ENCODE measurements at regions of chr15 and their contacts with region 1.

Region 1: GRCh38 chr15:85010386-85011159 is 28.9 kb downstream of the PDE8A start:
- DNase-seq: no peak
- ATAC-seq: peak; percentile 70
- H3K4me3 ChIP-seq: no peak overlapping the region
- H3K27ac ChIP-seq: peak overlapping the region; percentile 56
- H3K4me1 ChIP-seq: peaks cover 50% of the 10 kb centered on the region
- H3K27me3 ChIP-seq: no peaks in the 10 kb centered on the region
- CTCF ChIP-seq: no peak
- EP300 ChIP-seq: no peak
- POLR2A ChIP-seq: no peak
- RAD21 ChIP-seq: no peak

Region 2: GRCh38 chr15:85024509-85025214 is 14.1 kb after region 1 on chr15:
- CTCF ChIA-PET with region 1: interaction called, 9 read pairs
- POLR2A ChIA-PET with region 1: interaction called, 12 read pairs
- RAD21 ChIA-PET with region 1: interaction called, 21 read pairs
- SMC1A ChIA-PET with region 1: interaction called, 21 read pairs
- in situ Hi-C with region 1: no loop called
- intact Hi-C with region 1: no loop called
- DNase-seq: no peak
- ATAC-seq: peak; percentile 79
- H3K4me3 ChIP-seq: no peak overlapping the region
- H3K27ac ChIP-seq: peak overlapping the region; percentile 76
- H3K4me1 ChIP-seq: peaks cover 36% of the 10 kb centered on the region
- H3K27me3 ChIP-seq: no peaks in the 10 kb centered on the region
- CTCF ChIP-seq: no peak
- EP300 ChIP-seq: no peak
- POLR2A ChIP-seq: no peak
- RAD21 ChIP-seq: no peak

Region 3: GRCh38 chr15:85030301-85031049 is 19.9 kb after region 1 on chr15:
- CTCF ChIA-PET with region 1: interaction called, 8 read pairs
- POLR2A ChIA-PET with region 1: interaction called, 8 read pairs
- RAD21 ChIA-PET with region 1: interaction called, 21 read pairs
- SMC1A ChIA-PET with region 1: interaction called, 21 read pairs
- in situ Hi-C with region 1: no loop called
- intact Hi-C with region 1: no loop called
- DNase-seq: no peak
- ATAC-seq: peak; percentile 60
- H3K4me3 ChIP-seq: no peak overlapping the region
- H3K27ac ChIP-seq: peak overlapping the region; percentile 29
- H3K4me1 ChIP-seq: peaks cover 25% of the 10 kb centered on the region
- H3K27me3 ChIP-seq: no peaks in the 10 kb centered on the region
- CTCF ChIP-seq: no peak
- EP300 ChIP-seq: no peak
- POLR2A ChIP-seq: no peak
- RAD21 ChIP-seq: no peak

Region 4: DNA sequence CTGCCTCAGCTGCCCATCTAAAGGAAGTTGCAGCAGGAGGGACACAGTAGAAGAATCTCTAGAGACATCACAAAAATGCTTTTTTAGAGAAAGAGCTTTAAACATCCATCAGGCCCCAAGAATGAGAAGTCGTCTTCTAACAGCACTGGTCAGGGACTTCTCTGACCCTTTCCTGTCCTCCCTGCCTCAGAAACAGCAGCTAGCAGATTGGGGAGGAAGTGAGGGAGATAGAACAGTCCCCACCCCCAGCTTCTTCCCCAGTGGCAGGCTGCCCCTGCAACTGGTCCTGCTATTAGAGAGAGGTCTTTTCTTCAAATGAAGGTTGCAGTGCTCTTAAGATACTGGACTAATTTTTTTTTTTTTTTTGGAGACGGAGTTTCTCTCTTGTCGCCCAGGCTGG is 26.1 kb after region 1 on chr15:
- CTCF ChIA-PET with region 1: interaction called, 6 read pairs
- POLR2A ChIA-PET with region 1: interaction called, 3 read pairs
- RAD21 ChIA-PET with region 1: interaction called, 6 read pairs
- SMC1A ChIA-PET with region 1: interaction called, 21 read pairs
- in situ Hi-C with region 1: no loop called
- intact Hi-C with region 1: no loop called
- DNase-seq: no peak
- ATAC-seq: peak; percentile 76
- H3K4me3 ChIP-seq: no peak overlapping the region
- H3K27ac ChIP-seq: no peak overlapping the region
- H3K4me1 ChIP-seq: peaks cover 10% of the 10 kb centered on the region
- H3K27me3 ChIP-seq: no peaks in the 10 kb centered on the region
- CTCF ChIP-seq: no peak
- EP300 ChIP-seq: no peak
- POLR2A ChIP-seq: no peak
- RAD21 ChIP-seq: no peak

Measured in GM12878 (cell line).